ENCODE measurements at regions of chr12 and their contacts with region 1.

Region 1: GRCh38 chr12:80763874-80764273 is 47.2 kb downstream of the MYF5 start:
- DNase-seq: peak in 1 of 2 experiments; percentile 37
- H3K4me3 ChIP-seq: no peak overlapping the region
- H3K4me3 Mint-ChIP-seq: no peak overlapping the region
- H3K27ac Mint-ChIP-seq: no peak overlapping the region
- H3K4me1 ChIP-seq: no peaks in the 10 kb centered on the region
- H3K4me1 Mint-ChIP-seq: no peaks in the 10 kb centered on the region
- H3K27me3 ChIP-seq: no peaks in the 10 kb centered on the region
- H3K27me3 Mint-ChIP-seq: peaks cover 9% of the 10 kb centered on the region
- CTCF ChIP-seq: peak; percentile 62 to 64

Region 2: GRCh38 chr12:80472902-80473500 is 290.9 kb before region 1 on chr12:
- CTCF ChIA-PET with region 1: no interaction called
- POLR2A ChIA-PET with region 1: no interaction called
- intact Hi-C with region 1: loop called (anchors 1 kb)
- DNase-seq: peak in 1 of 2 experiments; percentile 38
- H3K4me3 ChIP-seq: no peak overlapping the region
- H3K4me3 Mint-ChIP-seq: no peak overlapping the region
- H3K27ac Mint-ChIP-seq: no peak overlapping the region
- H3K4me1 ChIP-seq: no peaks in the 10 kb centered on the region
- H3K4me1 Mint-ChIP-seq: no peaks in the 10 kb centered on the region
- H3K27me3 ChIP-seq: no peaks in the 10 kb centered on the region
- H3K27me3 Mint-ChIP-seq: no peaks in the 10 kb centered on the region
- CTCF ChIP-seq: peak in 1 of 2 experiments; percentile 56

Region 3: DNA sequence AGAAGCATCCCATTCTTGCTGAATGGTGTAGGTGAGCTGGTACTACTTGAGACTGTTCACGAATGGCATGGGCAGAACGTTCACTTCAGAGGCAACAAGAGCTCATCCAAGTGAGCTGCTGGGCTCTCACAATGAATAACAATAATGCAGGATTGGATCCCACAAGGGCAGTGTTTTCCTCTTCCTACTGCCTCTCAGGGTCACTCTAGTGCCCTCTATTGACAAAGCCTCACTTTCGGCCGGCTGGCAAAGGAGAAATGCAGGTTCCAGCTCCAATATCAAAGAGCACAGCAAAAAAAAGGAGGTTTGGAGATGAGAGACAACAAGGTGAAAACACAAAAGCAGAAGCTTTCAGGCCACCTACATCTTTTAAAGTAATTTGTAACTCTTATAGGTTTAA is 131.0 kb before region 1 on chr12:
- CTCF ChIA-PET with region 1: no interaction called
- POLR2A ChIA-PET with region 1: no interaction called
- intact Hi-C with region 1: loop called (anchors 10 kb)
- DNase-seq: peak; percentile 37 to 41
- H3K4me3 ChIP-seq: no peak overlapping the region
- H3K4me3 Mint-ChIP-seq: no peak overlapping the region
- H3K27ac Mint-ChIP-seq: no peak overlapping the region
- H3K4me1 ChIP-seq: no peaks in the 10 kb centered on the region
- H3K4me1 Mint-ChIP-seq: no peaks in the 10 kb centered on the region
- H3K27me3 ChIP-seq: no peaks in the 10 kb centered on the region
- H3K27me3 Mint-ChIP-seq: peaks cover 12% of the 10 kb centered on the region
- CTCF ChIP-seq: peak; percentile 39 to 48

Region 4: GRCh38 chr12:80778005-80778541 is 14.2 kb after region 1 on chr12:
- CTCF ChIA-PET with region 1: no interaction called
- POLR2A ChIA-PET with region 1: no interaction called
- intact Hi-C with region 1: no loop called
- DNase-seq: no peak
- H3K4me3 ChIP-seq: no peak overlapping the region
- H3K4me3 Mint-ChIP-seq: no peak overlapping the region
- H3K27ac Mint-ChIP-seq: no peak overlapping the region
- H3K4me1 ChIP-seq: 0 out of 2 replicates have a peak, but pooled peaks cover 4% of the 10 kb centered on the region
- H3K4me1 Mint-ChIP-seq: no peaks in the 10 kb centered on the region
- H3K27me3 ChIP-seq: no peaks in the 10 kb centered on the region
- H3K27me3 Mint-ChIP-seq: no peaks in the 10 kb centered on the region
- CTCF ChIP-seq: no peak

Measured in Caco-2 (cell line).